HAP-1 (cell line): ENCODE measurements at regions of chr3 and their contacts with region 1.

Region 1: GRCh38 chr3:151276687-151277042 is 1.7 kb downstream of the P2RY14 start:
- DNase-seq: no peak
- H3K4me3 ChIP-seq: no peak overlapping the region
- H3K4me1 ChIP-seq: no peaks in the 10 kb centered on the region
- H3K27me3 ChIP-seq: no peaks in the 10 kb centered on the region

Region 2: GRCh38 chr3:151168269-151169094 is 108.2 kb before region 1 on chr3:
- in situ Hi-C with region 1: loop called (anchors 5 kb)
- DNase-seq: peak; percentile 42 to 85
- H3K4me3 ChIP-seq: no peak overlapping the region
- H3K4me1 ChIP-seq: no peaks in the 10 kb centered on the region
- H3K27me3 ChIP-seq: no peaks in the 10 kb centered on the region

Region 3: DNA sequence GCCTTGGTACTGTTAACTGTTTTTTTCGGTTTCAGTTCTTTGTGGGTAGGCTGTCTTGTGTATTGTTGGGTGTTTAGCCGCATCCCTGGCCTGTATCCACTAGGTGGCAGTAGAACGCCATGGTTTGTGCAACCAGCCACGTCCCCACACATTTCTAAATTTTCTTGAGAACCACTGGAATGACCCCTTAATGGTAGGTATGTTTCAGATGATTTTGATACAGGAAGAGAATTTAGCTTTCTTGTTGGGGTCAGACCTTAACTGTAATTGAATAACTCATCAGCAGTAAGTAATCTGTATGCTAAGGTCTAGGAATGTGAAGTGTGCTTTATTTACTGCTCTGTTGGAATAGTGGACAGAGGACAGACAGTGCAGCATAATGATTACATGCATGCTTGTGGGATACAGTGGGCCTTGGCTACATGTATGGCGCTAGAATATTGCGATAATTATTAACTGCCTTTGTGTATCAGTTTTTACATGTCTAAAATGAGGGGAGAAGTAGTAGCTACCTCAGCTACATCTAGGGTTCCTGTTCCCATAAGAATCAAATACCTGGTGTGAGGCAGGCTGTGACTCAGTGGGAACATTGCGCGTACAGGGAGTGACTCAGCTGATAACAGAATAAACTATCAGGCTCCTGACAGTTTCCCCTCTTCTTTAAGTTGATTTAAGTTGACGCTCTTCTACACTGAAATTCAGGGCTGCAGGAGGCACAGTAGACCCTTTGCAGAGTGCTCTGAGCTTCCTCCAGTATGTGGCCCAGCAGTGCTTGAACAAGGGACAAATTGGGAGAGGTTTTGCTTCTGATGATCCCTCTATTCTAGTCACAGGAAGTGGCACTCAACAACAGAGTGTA is 48.6 kb before region 1 on chr3:
- in situ Hi-C with region 1: loop called (anchors 5 kb)
- DNase-seq: peak; percentile 56 to 81
- H3K4me3 ChIP-seq: no peak overlapping the region
- H3K4me1 ChIP-seq: no peaks in the 10 kb centered on the region; the same call in 1 of the 2 replicates
- H3K27me3 ChIP-seq: no peaks in the 10 kb centered on the region